Activated T-helper 2 cell treated with anti-CD3 and anti-CD28 coated beads, Interferon-gamma antibody, Interleukin-2, Interleukin-4, amounts not matched to agents 10 μg/mL and 5 μg/mL and 100 μg/mL, durations not matched to agents 14 hours and 24 hours and 36 hours (primary cell): ENCODE measurements at regions of chr17 and their contacts with region 1.

Region 1: GRCh38 chr17:77247048-77247541 is 106.3 kb downstream of the SEC14L1 start:
- DNase-seq: peak; percentile 78
- H3K4me3 Mint-ChIP-seq: peak overlapping the region; percentile 45
- H3K27ac Mint-ChIP-seq: no peak overlapping the region
- H3K4me1 Mint-ChIP-seq: peaks cover 15% of the 10 kb centered on the region
- H3K27me3 Mint-ChIP-seq: peaks cover 22% of the 10 kb centered on the region

Region 2: GRCh38 chr17:76868176-76868668 is 378.9 kb before region 1 on chr17 and contains the start of gene MGAT5B:
- intact Hi-C with region 1: loop called (anchors 10 kb)
- DNase-seq: peak; percentile 68
- H3K4me3 Mint-ChIP-seq: peak within 1 kb of the TSS; percentile 77
- H3K27ac Mint-ChIP-seq: no peak within 1 kb of the TSS
- H3K4me1 Mint-ChIP-seq: peaks cover 5% of the 10 kb centered on the region
- H3K27me3 Mint-ChIP-seq: peaks cover 35% of the 10 kb centered on the region
- total RNA-seq, gene MGAT5B: 0.55 TPM in 2 replicates

Region 3: DNA sequence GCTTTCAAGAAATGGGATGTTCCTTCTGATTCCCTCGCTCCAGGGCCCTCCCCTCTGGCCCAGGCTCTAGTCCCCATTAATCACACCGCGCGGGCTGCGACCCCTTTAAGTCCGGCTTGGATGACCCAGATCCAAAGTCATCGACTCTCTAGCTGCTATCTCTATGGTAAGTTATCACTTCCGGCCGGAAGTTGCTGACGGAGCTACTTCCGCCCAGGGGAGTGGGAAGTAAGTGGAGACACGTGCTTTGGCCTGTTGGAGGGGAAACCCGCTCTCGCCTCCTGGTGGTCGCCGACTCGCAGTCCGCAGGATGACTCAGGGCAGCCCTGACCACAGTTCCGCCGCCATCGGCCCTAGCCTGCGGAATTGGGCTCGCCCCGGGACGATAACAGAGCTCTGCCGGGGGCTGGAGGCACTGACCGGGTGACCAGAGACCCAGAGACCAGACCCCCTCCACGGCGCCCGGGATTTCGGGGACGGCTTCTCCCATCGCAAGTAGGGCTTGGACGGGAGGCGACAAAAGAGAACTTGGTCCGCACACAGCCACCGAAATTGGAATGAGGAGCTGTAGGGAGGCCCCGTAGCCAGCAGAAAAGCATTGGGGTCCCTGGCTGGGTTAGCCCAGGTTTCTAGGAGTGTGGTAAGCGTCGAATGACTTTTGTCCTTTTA is 158.5 kb before region 1 on chr17:
- intact Hi-C with region 1: loop called (anchors 1 kb)
- DNase-seq: peak; percentile 80
- H3K4me3 Mint-ChIP-seq: peak overlapping the region; percentile 91
- H3K27ac Mint-ChIP-seq: peak overlapping the region; percentile 94
- H3K4me1 Mint-ChIP-seq: peaks cover 38% of the 10 kb centered on the region
- H3K27me3 Mint-ChIP-seq: peaks cover 2% of the 10 kb centered on the region

Region 4: GRCh38 chr17:77182205-77183172 is 64.6 kb before region 1 on chr17:
- intact Hi-C with region 1: loop called (anchors 5 kb)
- DNase-seq: no peak
- H3K4me3 Mint-ChIP-seq: peak overlapping the region; percentile 42
- H3K27ac Mint-ChIP-seq: peak overlapping the region; percentile 82
- H3K4me1 Mint-ChIP-seq: peaks cover 33% of the 10 kb centered on the region
- H3K27me3 Mint-ChIP-seq: no peaks in the 10 kb centered on the region